ENCODE measurements at regions of chr19 and their contacts with region 1.

Region 1: GRCh38 chr19:2274931-2275535 is 6.9 kb downstream of the PEAK3 start:
- DNase-seq: peak; percentile 53 to 71 (median 56)
- ATAC-seq: peak; percentile 7; the same call in 2 of the 3 replicates
- H3K4me3 ChIP-seq: no peak overlapping the region
- H3K27ac ChIP-seq: no peak overlapping the region
- H3K4me1 ChIP-seq: peaks cover 10 to 73% of the 10 kb centered on the region in 2 experiments
- H3K27me3 ChIP-seq: no peaks in the 10 kb centered on the region
- CTCF ChIP-seq: peak; percentile 64 to 73 (median 72)
- EP300 ChIP-seq: no peak
- POLR2A ChIP-seq: 0 out of 2 replicates have a peak, but pooled peaks have one; percentile 21
- RAD21 ChIP-seq: peak; percentile 76 to 81

Region 2: GRCh38 chr19:2213799-2214198 is 61.2 kb before region 1 on chr19:
- CTCF ChIA-PET with region 1: no interaction called
- POLR2A ChIA-PET with region 1: no interaction called
- in situ Hi-C with region 1: no loop called
- intact Hi-C with region 1: no loop called
- DNase-seq: no peak
- ATAC-seq: no peak
- H3K4me3 ChIP-seq: no peak overlapping the region
- H3K27ac ChIP-seq: no peak overlapping the region
- H3K4me1 ChIP-seq: peaks cover 0 to 43% of the 10 kb centered on the region in 2 experiments; a peak in 3 of 5 replicates
- H3K27me3 ChIP-seq: no peaks in the 10 kb centered on the region
- CTCF ChIP-seq: no peak
- EP300 ChIP-seq: no peak
- POLR2A ChIP-seq: no peak
- RAD21 ChIP-seq: no peak

Region 3: DNA sequence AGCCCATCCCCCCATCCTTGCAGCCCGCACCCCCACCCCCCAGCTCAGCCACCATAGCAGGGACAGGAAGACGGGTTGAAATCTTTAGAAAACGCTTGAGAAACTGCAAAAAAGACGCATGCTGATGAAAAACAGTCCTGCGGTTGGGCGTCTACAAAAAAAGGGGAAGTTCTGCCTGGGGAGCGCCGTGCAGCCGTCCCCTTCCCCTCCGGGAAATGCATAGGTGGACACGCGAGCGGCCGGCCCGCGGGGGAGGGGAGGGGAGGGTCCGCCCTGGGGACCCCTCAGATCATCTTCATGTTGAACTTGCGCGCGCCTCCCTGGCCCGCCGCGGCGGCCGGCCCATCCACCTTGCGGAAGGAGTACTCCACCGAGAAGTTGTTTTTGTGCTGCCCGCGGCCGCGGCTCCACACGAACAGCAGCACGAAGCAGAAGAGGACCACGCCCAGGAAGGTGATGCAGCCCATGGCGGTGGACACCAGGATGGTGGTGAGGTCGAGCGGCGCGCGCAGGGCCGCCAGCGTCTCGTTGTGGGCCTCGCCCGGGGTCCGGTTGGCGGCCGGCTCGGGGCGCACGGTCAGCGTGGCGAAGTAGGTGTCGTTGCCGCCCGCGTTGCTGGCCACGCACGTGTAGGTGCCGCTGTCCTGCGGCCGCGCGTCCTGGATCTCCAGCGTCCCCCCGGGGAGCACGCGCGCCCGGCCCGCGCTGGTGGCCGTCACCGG is 14.8 kb after region 1 on chr19:
- CTCF ChIA-PET with region 1: no interaction called
- POLR2A ChIA-PET with region 1: interaction called, 18 read pairs
- in situ Hi-C with region 1: no loop called
- intact Hi-C with region 1: no loop called
- DNase-seq: peak; percentile 52 to 67 (median 56)
- ATAC-seq: peak; percentile 71
- H3K4me3 ChIP-seq: peak overlapping the region; percentile 43
- H3K27ac ChIP-seq: peak overlapping the region; percentile 76; the same call in 1 of the 3 replicates
- H3K4me1 ChIP-seq: peaks cover 10 to 51% of the 10 kb centered on the region in 2 experiments
- H3K27me3 ChIP-seq: no peaks in the 10 kb centered on the region
- CTCF ChIP-seq: no peak
- EP300 ChIP-seq: no peak
- POLR2A ChIP-seq: no peak
- RAD21 ChIP-seq: no peak

Region 4: GRCh38 chr19:2315818-2316353 is 40.9 kb after region 1 on chr19:
- CTCF ChIA-PET with region 1: no interaction called
- POLR2A ChIA-PET with region 1: interaction called, 6 read pairs
- in situ Hi-C with region 1: no loop called
- intact Hi-C with region 1: loop called (anchors 5 kb)
- DNase-seq: peak in 3 of 4 experiments; percentile 43 to 69 (median 66)
- ATAC-seq: peak; percentile 89
- H3K4me3 ChIP-seq: no peak overlapping the region
- H3K27ac ChIP-seq: no peak overlapping the region
- H3K4me1 ChIP-seq: peaks cover 3 to 33% of the 10 kb centered on the region in 2 experiments; a peak in 3 of 5 replicates
- H3K27me3 ChIP-seq: no peaks in the 10 kb centered on the region
- CTCF ChIP-seq: peak; percentile 57 to 79 (median 76)
- EP300 ChIP-seq: no peak
- POLR2A ChIP-seq: no peak
- RAD21 ChIP-seq: peak; percentile 64 to 87

Region 5: DNA sequence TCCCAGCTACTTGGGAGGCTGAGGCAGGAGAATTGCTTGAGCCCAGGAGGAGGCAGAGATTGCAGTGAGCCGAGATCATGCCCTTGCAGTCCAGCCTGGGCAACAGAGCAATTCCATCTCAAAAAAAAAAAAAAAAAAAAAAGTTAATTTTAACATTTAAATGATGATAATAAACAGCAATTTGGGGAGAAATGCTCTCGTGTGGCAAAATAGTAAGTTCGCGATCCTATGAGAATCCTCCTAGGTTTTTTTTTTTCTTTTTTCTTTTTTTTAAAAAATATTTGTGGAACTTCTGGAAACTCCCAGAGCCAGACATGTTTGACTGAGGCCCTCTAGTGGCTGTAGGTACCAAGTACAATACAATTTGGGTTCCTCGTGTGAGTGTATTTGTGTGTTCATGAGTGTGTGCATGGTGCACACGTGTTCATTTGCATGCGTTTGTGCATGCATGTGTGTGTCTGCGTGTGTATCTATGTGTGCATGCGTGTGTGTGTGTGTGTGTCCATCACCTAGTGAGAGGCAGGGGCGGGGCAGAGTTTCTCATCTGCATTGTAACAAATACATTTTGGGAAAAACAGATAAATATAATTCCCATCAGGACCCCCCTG is 116.2 kb after region 1 on chr19:
- CTCF ChIA-PET with region 1: interaction called, 5 read pairs
- POLR2A ChIA-PET with region 1: interaction called, 4 read pairs
- in situ Hi-C with region 1: loop called (anchors 5 kb)
- intact Hi-C with region 1: loop called (anchors 1 kb)
- DNase-seq: peak; percentile 55 to 71 (median 61)
- ATAC-seq: peak; percentile 59
- H3K4me3 ChIP-seq: no peak overlapping the region
- H3K27ac ChIP-seq: no peak overlapping the region; the same call in 2 of the 3 replicates
- H3K4me1 ChIP-seq: peaks cover 6 to 19% of the 10 kb centered on the region in 2 experiments; a peak in 4 of 5 replicates
- H3K27me3 ChIP-seq: no peaks in the 10 kb centered on the region
- CTCF ChIP-seq: peak; percentile 69 to 89 (median 78)
- EP300 ChIP-seq: 0 out of 2 replicates have a peak, but pooled peaks have one; percentile 11
- POLR2A ChIP-seq: no peak
- RAD21 ChIP-seq: peak; percentile 78 to 85

Region 6: GRCh38 chr19:2610637-2611482 is 335.8 kb after region 1 on chr19:
- CTCF ChIA-PET with region 1: interaction called, 5 read pairs
- POLR2A ChIA-PET with region 1: no interaction called
- in situ Hi-C with region 1: no loop called
- intact Hi-C with region 1: loop called (anchors 5 kb)
- DNase-seq: peak; percentile 83 to 87 (median 87)
- ATAC-seq: peak; percentile 97
- H3K4me3 ChIP-seq: peak overlapping the region; percentile 41
- H3K27ac ChIP-seq: no peak overlapping the region
- H3K4me1 ChIP-seq: peaks cover 0 to 25% of the 10 kb centered on the region in 2 experiments; a peak in 2 of 5 replicates
- H3K27me3 ChIP-seq: peaks cover 18 to 49% of the 10 kb centered on the region in 2 experiments; a peak in 4 of 5 replicates
- CTCF ChIP-seq: peak; percentile 87 to 93 (median 91)
- EP300 ChIP-seq: no peak
- POLR2A ChIP-seq: no peak
- RAD21 ChIP-seq: peak; percentile 92 to 96